ENCODE measurements at regions of chr2 and their contacts with region 1.

Region 1: DNA sequence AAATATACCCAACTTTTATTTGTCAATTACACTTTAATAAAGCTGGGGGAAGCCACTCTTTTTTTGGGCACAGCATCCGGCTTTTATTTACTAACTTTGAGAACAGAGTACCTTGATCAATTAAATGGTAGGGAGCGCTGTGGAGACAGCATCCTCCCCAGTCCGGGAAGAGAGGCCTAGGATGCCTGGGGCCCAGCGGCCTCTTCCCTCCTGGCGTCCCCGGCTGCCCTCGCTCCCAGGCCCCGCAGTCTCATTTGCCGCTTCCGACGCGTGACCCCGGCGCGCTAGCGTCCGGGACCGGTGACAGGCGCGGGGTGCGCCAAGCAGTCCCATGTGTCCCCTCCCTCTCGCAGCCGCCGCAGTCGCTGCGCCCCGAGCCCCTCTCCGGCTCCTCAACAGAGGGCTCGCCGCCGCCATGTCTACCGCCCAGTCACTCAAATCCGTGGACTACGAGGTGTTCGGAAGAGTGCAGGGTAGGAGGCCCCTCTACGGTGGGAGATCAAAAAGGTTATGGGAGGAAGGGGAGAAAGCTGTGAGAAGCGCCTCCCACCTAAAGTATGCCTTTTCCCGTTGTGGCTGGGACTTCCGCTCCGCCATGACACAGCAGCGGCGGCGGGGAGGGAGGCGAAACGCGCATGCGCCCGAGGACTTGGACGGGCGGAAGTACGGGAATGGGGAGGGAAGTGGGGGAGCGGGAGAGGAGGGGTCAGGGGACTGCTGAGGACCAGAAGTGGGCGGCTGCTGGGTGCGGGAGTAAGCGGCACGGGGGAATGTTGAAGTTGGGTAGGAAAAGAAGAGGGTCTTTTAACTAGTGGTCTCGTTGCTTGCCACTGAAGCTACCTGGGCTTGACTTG is at the start of gene ACYP2:
- DNase-seq: peak; percentile 85
- ATAC-seq: peak; percentile 93
- H3K4me3 ChIP-seq: peak within 1 kb of the TSS; percentile 70
- H3K27ac ChIP-seq: peak within 1 kb of the TSS; percentile 97
- H3K4me1 ChIP-seq: no peaks in the 10 kb centered on the region
- H3K27me3 ChIP-seq: no peaks in the 10 kb centered on the region
- CTCF ChIP-seq: 0 out of 6 replicates have a peak, but pooled peaks of 1 of the 3 experiments have one; percentile 4
- EP300 ChIP-seq: no peak
- POLR2A ChIP-seq: peak; percentile 98
- RAD21 ChIP-seq: no peak
- polyA plus RNA-seq, gene ACYP2: 11.3 to 11.7 TPM

Region 2: DNA sequence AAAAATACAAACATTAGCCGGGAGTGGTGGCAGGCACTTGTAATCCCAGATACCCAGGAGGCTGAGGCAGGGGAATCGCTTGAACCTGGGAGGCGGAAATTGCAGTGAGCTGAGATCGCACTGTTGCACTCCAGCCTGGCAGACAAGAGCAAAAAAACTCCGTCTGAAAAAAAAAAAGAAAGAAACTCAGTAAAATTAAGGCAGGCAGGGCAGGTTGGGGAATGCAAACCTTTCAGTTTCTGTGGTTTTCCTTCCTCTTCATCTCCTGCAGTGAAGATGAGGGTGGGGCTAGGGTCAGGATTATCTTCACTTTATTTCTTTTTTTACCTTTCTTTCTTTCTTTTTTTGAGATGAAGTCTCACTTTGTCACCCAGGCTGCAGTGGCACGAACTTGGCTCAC is 101.5 kb before region 1 on chr2:
- CTCF ChIA-PET with region 1: no interaction called
- POLR2A ChIA-PET with region 1: no interaction called
- RAD21 ChIA-PET with region 1: no interaction called
- SMC1A ChIA-PET with region 1: no interaction called
- in situ Hi-C with region 1: no loop called
- intact Hi-C with region 1: no loop called
- DNase-seq: no peak
- ATAC-seq: no peak
- H3K4me3 ChIP-seq: no peak overlapping the region
- H3K27ac ChIP-seq: no peak overlapping the region
- H3K4me1 ChIP-seq: peaks cover 5% of the 10 kb centered on the region
- H3K27me3 ChIP-seq: no peaks in the 10 kb centered on the region
- CTCF ChIP-seq: no peak
- EP300 ChIP-seq: no peak
- POLR2A ChIP-seq: no peak
- RAD21 ChIP-seq: no peak

Region 3: GRCh38 chr2:54723131-54723995 is 607.9 kb after region 1 on chr2 and contains the start of gene EML6:
- CTCF ChIA-PET with region 1: no interaction called
- POLR2A ChIA-PET with region 1: no interaction called
- RAD21 ChIA-PET with region 1: no interaction called
- SMC1A ChIA-PET with region 1: no interaction called
- in situ Hi-C with region 1: loop called (anchors 25 kb)
- intact Hi-C with region 1: no loop called
- DNase-seq: peak; percentile 89
- ATAC-seq: peak; percentile 99
- H3K4me3 ChIP-seq: peak within 1 kb of the TSS; percentile 88
- H3K27ac ChIP-seq: no peak within 1 kb of the TSS
- H3K4me1 ChIP-seq: no peaks in the 10 kb centered on the region
- H3K27me3 ChIP-seq: peaks cover 7 to 10% of the 10 kb centered on the region in 2 experiments
- CTCF ChIP-seq: peak; percentile 3 to 26 (median 19); a peak in 1 of 6 replicates
- EP300 ChIP-seq: no peak
- POLR2A ChIP-seq: peak; percentile 61; the same call in 1 of the 2 replicates
- RAD21 ChIP-seq: no peak
- polyA plus RNA-seq, gene EML6: 0.29 to 0.35 TPM

Region 4: DNA sequence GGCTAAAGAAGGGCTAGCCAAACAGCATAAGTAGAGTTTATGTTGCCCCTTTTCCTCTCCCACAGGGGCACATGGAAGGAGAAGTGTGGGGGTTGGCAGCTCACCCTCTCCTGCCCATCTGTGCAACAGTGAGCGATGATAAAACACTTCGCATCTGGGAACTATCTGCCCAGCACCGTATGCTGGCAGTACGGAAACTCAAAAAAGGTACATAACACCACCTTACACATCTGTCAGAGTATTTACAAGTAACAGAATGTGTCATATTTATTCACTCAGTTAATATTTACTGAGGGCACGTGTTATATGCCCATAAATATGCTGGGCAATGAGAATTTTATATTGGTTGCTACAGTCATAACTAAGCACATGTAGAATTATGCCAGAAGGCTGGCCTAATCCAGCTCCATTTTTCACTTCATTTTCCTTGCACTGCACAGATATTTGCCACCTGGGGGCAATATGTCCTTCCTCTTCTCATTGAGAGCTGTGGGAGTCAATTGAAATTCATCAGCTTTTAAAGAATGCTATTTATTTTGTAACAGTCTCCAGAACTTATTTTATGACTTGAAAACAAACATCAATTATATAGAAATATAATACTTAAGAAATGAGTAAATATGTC is 784.2 kb after region 1 on chr2:
- CTCF ChIA-PET with region 1: no interaction called
- POLR2A ChIA-PET with region 1: no interaction called
- RAD21 ChIA-PET with region 1: no interaction called
- SMC1A ChIA-PET with region 1: no interaction called
- in situ Hi-C with region 1: no loop called
- intact Hi-C with region 1: no loop called
- DNase-seq: peak; percentile 4
- ATAC-seq: peak; percentile 68
- H3K4me3 ChIP-seq: no peak overlapping the region
- H3K27ac ChIP-seq: no peak overlapping the region
- H3K4me1 ChIP-seq: no peaks in the 10 kb centered on the region
- H3K27me3 ChIP-seq: no peaks in the 10 kb centered on the region
- CTCF ChIP-seq: peak; percentile 39 to 64 (median 55); a peak in 5 of 6 replicates
- EP300 ChIP-seq: no peak
- POLR2A ChIP-seq: no peak
- RAD21 ChIP-seq: peak; percentile 92